ENCODE measurements at regions of chr4 and their contacts with region 1.

Region 1: GRCh38 chr4:150875367-150875766 is 139.7 kb downstream of the LRBA start:
- DNase-seq: no peak
- ATAC-seq: no peak
- H3K4me3 ChIP-seq: no peak overlapping the region
- H3K4me3 Mint-ChIP-seq: no peak overlapping the region
- H3K27ac ChIP-seq: no peak overlapping the region
- H3K27ac Mint-ChIP-seq: no peak overlapping the region
- H3K4me1 ChIP-seq: no peaks in the 10 kb centered on the region
- H3K4me1 Mint-ChIP-seq: peaks cover 17 to 27% (median 23%) of the 10 kb centered on the region in 3 donors
- H3K27me3 ChIP-seq: no peaks in the 10 kb centered on the region
- H3K27me3 Mint-ChIP-seq: no peaks in the 10 kb centered on the region

Region 2: GRCh38 chr4:151983854-151984253 is 1108.5 kb after region 1 on chr4:
- CTCF ChIA-PET with region 1: interaction called in 1 of 2 experiments, 12 read pairs
- POLR2A ChIA-PET with region 1: no interaction called
- DNase-seq: no peak
- ATAC-seq: no peak
- H3K4me3 ChIP-seq: no peak overlapping the region
- H3K4me3 Mint-ChIP-seq: no peak overlapping the region
- H3K27ac ChIP-seq: no peak overlapping the region
- H3K27ac Mint-ChIP-seq: no peak overlapping the region
- H3K4me1 ChIP-seq: no peaks in the 10 kb centered on the region
- H3K4me1 Mint-ChIP-seq: peaks cover 2 to 4% (median 2%) of the 10 kb centered on the region in 3 donors
- H3K27me3 ChIP-seq: no peaks in the 10 kb centered on the region
- H3K27me3 Mint-ChIP-seq: no peaks in the 10 kb centered on the region